ENCODE measurements at regions of chr13 and their contacts with region 1.

Region 1: DNA sequence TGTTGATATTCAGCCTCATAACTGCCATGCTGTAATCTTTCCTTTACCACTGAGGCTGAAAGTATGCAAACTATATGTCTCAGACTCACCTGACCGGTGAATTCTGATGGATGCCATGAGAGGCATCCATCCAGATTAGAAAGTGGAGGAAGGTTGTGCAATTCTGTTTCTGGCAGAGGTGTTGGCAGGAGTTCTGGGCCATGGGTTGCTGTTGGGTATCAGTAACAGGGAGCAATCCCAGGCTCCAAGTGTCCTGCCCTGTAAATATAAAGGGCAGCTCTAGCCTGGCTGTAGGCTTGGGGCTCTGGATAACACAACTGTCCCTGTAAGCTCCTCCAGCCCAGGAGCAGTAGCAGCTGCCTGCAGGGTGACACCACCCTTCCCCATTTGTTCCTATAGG is 77.4 kb upstream of the ABCC4 start:
- DNase-seq: no peak
- H3K4me3 ChIP-seq: no peak overlapping the region
- H3K27ac ChIP-seq: no peak overlapping the region
- H3K27me3 ChIP-seq: no peaks in the 10 kb centered on the region
- CTCF ChIP-seq: no peak

Region 2: GRCh38 chr13:95181586-95181985 is 197.0 kb before region 1 on chr13:
- CTCF ChIA-PET with region 1: interaction called, 13 read pairs
- POLR2A ChIA-PET with region 1: no interaction called
- DNase-seq: no peak
- H3K4me3 ChIP-seq: no peak overlapping the region
- H3K27ac ChIP-seq: no peak overlapping the region
- H3K27me3 ChIP-seq: no peaks in the 10 kb centered on the region
- CTCF ChIP-seq: no peak

Region 3: DNA sequence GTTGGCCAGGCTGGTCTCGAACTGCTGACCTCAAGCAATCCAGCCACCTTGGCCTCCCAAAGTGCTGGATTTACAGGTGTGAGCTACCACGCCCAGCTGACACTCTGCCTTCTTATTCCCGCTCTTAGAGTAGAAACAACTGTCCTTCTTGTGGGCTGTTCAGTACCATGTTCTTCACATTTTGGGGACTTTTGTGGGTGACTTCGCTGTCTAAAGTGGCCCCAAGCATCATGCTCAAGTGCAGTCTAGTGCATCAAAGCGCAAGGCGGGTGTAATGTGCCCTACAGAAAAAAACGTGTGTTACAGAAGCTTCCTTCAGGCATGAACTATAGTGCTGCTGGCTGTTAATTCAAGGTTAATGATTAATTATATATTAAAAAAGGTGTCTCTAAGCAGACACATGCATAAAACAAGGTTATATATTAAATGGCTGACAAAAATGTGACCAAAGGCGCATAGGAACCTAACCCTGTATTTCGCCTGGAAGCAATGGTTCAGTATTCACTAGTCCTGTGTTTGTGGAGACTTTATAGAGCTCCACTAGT is 115.7 kb before region 1 on chr13:
- CTCF ChIA-PET with region 1: no interaction called
- POLR2A ChIA-PET with region 1: no interaction called
- DNase-seq: no peak
- H3K4me3 ChIP-seq: no peak overlapping the region
- H3K27ac ChIP-seq: no peak overlapping the region
- H3K27me3 ChIP-seq: no peaks in the 10 kb centered on the region
- CTCF ChIP-seq: no peak

Region 4: DNA sequence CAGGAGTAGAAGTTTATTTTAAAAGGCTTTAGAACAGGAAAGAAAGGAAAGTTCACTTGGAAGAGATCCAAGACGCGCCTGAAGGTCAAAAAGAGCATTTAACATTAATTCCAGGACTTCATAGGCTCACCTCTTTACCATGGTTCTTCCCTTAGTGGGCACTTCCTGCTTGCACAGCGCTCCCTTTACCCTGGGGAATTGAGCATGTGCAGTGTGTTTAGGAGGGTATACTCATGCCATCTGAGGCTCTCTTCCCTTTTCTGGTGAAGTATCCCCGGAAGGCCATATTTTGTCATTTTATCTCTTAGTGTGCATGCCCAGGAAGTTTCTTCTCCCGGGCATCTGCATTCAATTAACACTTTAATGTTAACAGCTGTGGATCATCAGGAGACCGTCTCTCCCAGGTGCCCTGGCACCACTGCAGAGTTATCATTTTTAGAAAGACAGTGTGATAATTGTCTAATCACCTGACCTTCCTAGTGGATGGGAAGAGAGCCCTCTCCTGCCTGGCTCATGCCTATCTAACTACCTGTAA is 11.2 kb before region 1 on chr13:
- CTCF ChIA-PET with region 1: interaction called, 17 read pairs
- POLR2A ChIA-PET with region 1: no interaction called
- DNase-seq: no peak
- H3K4me3 ChIP-seq: no peak overlapping the region
- H3K27ac ChIP-seq: no peak overlapping the region
- H3K27me3 ChIP-seq: peaks cover 8% of the 10 kb centered on the region
- CTCF ChIP-seq: no peak

Region 5: DNA sequence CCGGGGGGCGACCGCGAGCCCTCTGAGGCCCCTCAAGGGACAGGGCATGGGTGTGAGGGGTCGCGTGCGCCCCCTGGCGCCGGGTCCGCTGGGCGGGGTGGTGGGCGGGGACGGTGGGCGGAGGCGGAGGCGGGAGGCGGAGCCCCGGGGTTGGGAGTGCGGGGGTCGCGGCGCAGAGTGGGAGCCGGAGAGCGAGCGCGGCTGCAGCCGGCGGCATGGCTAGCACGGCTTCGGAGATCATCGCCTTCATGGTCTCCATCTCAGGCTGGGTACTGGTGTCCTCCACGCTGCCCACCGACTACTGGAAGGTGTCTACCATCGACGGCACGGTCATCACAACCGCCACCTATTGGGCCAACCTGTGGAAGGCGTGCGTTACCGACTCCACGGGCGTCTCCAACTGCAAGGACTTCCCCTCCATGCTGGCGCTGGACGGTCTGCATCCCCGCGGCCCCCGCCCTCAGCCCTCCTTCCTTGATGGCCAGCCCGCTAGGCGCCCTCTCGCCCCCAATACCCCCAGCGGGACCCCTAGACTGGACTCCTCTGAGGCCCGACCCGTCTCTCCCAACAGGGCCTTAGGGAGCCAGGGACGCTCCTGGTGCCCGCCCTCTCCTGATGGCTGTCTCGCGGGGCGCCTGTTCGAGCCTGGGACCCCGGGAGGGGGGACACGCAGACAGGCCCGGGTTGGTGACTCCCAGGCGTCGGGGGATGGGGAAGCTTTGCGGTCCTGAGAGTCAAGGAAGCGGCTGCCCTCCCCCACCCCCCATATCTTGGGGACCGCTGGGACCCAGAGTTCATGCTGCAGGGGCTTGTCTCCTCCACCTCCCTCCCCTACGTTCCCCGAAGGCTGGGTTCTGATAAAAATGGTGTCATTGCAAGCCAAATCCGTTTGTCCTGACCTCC is 174.2 kb after region 1 on chr13 and contains the start of gene CLDN10:
- CTCF ChIA-PET with region 1: no interaction called
- POLR2A ChIA-PET with region 1: no interaction called
- DNase-seq: no peak
- H3K4me3 ChIP-seq: no peak within 1 kb of the TSS
- H3K27ac ChIP-seq: no peak within 1 kb of the TSS
- H3K27me3 ChIP-seq: peaks cover 62% of the 10 kb centered on the region
- CTCF ChIP-seq: no peak
- polyA plus RNA-seq, gene CLDN10: not detected in 2 replicates

Measured in AG04450 (cell line).